ENCODE measurements at regions of chr2 and their contacts with region 1.

Region 1: GRCh38 chr2:215498431-215498830 is 62.6 kb upstream of the FN1 start:
- DNase-seq: no peak
- ATAC-seq: no peak

Region 2: GRCh38 chr2:215537611-215538010 is 39.2 kb after region 1 on chr2:
- intact Hi-C with region 1: loop called (anchors 2 kb)
- DNase-seq: no peak
- ATAC-seq: peak; percentile 57

Region 3: DNA sequence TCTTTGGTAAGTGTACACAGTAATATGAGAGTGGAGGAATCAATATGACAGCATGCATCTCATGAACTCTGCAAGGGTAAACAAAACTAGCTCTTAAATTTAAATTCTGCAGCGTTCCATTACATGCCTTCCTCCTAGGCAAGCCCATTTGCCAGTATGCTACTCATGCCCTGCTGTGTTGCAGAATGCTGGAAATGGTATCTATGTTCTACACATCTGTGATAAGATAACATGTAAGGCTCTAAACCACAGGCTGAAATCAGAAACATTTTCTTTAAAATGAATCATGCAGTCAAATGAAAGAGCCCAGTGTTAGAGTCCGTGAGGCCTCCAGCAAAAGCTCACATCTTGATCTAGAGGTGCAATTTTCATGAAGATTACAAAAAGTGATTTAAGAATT is 50.3 kb after region 1 on chr2:
- intact Hi-C with region 1: no loop called
- DNase-seq: no peak
- ATAC-seq: no peak

Region 4: DNA sequence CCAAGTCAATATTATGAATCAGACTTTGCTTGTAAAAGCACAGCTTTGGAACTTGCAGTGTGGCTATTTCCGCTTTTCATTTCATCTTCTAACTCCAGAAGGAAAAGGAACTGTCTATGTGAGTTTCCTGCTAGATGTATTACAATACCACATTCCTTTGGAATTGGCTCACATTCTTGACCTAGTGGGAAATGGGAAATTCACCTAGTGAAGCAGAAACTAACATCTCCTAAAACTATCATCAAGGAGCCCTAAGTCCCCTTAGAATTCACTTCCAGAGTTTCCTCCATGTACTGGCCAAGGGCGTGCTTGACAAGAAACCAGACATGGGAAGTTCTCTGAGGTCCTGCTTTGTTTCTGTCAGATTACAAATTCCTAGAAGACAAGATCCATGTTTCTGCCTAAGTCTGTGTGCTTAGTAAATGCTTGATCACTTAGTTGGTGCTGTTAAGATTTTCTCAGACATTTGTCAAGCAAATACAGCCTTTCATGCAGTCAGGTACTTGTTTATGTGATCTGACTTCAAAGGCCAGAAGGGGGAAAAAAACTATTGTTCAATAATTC is 213.1 kb after region 1 on chr2:
- intact Hi-C with region 1: no loop called
- DNase-seq: no peak
- ATAC-seq: peak; percentile 75

Measured in left ventricle myocardium superior (tissue), 1 donor.